ENCODE measurements at regions of chr7 and their contacts with region 1.

Region 1: GRCh38 chr7:41940760-41941343 is 238.0 kb upstream of the INHBA start:
- DNase-seq: peak in 4 of 5 donors; percentile 34 to 41 (median 37)
- H3K4me3 ChIP-seq: no peak overlapping the region
- H3K4me3 Mint-ChIP-seq: no peak overlapping the region
- H3K27ac ChIP-seq: no peak overlapping the region
- H3K27ac Mint-ChIP-seq: no peak overlapping the region
- H3K4me1 ChIP-seq: no peaks in the 10 kb centered on the region
- H3K4me1 Mint-ChIP-seq: peaks cover 6 to 17% (median 13%) of the 10 kb centered on the region in 4 donors
- H3K27me3 ChIP-seq: no peaks in the 10 kb centered on the region
- H3K27me3 Mint-ChIP-seq: peaks cover 14 to 18% of the 10 kb centered on the region in 2 donors

Region 2: GRCh38 chr7:41928781-41929180 is 12.1 kb before region 1 on chr7:
- CTCF ChIA-PET with region 1: interaction called, 15 read pairs
- POLR2A ChIA-PET with region 1: no interaction called
- intact Hi-C with region 1: no loop called
- DNase-seq: no peak
- H3K4me3 ChIP-seq: no peak overlapping the region
- H3K4me3 Mint-ChIP-seq: no peak overlapping the region
- H3K27ac ChIP-seq: no peak overlapping the region
- H3K27ac Mint-ChIP-seq: no peak overlapping the region
- H3K4me1 ChIP-seq: no peaks in the 10 kb centered on the region
- H3K4me1 Mint-ChIP-seq: no peaks in the 10 kb centered on the region
- H3K27me3 ChIP-seq: no peaks in the 10 kb centered on the region
- H3K27me3 Mint-ChIP-seq: peaks cover 6% of the 10 kb centered on the region in 2 donors

Region 3: GRCh38 chr7:41955893-41956675 is 15.2 kb after region 1 on chr7:
- CTCF ChIA-PET with region 1: interaction called, 30 read pairs
- POLR2A ChIA-PET with region 1: no interaction called
- intact Hi-C with region 1: no loop called
- DNase-seq: no peak
- H3K4me3 ChIP-seq: no peak overlapping the region
- H3K4me3 Mint-ChIP-seq: no peak overlapping the region
- H3K27ac ChIP-seq: no peak overlapping the region
- H3K27ac Mint-ChIP-seq: no peak overlapping the region
- H3K4me1 ChIP-seq: no peaks in the 10 kb centered on the region
- H3K4me1 Mint-ChIP-seq: no peaks in the 10 kb centered on the region
- H3K27me3 ChIP-seq: no peaks in the 10 kb centered on the region
- H3K27me3 Mint-ChIP-seq: peaks cover 9 to 30% of the 10 kb centered on the region in 2 donors

Region 4: DNA sequence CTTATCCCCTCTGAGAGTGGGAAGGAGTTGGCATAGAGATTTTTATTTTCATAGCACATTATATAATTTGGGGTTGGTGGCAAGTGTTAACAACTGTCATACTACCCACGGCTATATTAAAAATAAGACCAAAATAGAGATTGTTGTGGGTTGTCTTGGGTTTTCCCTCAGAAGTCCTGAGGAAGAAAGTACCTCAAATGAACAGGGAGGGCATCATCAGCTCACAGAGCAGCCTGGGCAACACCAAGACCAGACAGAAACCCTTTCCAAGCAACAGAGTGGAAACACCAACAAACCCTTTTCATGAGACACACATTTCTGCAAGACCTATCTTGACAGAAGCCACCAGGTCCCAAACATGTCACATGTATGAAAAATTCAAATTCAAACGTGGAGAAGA is 174.9 kb after region 1 on chr7:
- CTCF ChIA-PET with region 1: no interaction called
- POLR2A ChIA-PET with region 1: no interaction called
- intact Hi-C with region 1: no loop called
- DNase-seq: no peak
- H3K4me3 ChIP-seq: no peak overlapping the region
- H3K4me3 Mint-ChIP-seq: no peak overlapping the region
- H3K27ac ChIP-seq: no peak overlapping the region
- H3K27ac Mint-ChIP-seq: no peak overlapping the region
- H3K4me1 ChIP-seq: no peaks in the 10 kb centered on the region
- H3K4me1 Mint-ChIP-seq: no peaks in the 10 kb centered on the region
- H3K27me3 ChIP-seq: no peaks in the 10 kb centered on the region
- H3K27me3 Mint-ChIP-seq: no peaks in the 10 kb centered on the region

Region 5: DNA sequence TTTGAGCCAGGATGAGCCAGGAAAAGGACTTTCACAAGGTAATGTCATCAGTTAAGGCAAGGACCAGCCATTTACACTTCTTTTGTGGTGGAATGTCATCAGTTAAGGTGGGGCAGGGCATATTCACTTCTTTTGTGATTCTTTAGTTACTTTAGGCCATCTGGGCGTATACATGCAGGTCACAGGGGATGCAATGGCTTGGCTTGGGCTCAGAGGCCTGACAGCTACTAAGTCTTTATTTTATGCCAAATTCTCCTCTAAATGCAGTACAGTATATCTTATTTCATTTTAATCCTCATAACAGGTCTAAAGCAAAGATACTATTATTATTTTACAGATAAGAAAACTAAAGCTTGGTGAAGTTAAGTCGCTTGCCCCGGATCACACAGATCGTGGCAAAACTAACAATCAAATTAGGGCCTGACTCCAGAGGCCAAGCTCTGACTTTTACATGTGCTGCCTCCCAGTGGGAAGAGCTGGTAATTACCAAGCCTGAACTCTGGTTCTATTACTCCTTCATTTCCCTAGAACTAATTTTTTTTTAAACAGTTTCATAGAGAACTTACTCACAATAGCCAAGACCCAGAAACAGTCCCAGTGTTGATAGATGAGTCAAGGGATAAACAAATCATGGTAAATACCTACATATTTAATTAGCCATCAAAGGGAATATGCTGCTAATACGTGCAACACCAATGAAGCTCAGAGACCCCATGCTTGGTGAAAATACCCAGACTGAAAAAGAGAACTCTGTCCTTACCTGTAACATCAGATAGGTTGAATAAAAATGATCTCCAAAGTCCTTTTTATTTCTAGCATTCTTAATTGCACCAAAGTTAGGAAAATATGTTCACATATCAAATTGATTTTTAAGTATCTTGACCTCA is 935.6 kb after region 1 on chr7:
- CTCF ChIA-PET with region 1: interaction called, 4 read pairs
- POLR2A ChIA-PET with region 1: no interaction called
- intact Hi-C with region 1: loop called (anchors 2 kb)
- DNase-seq: peak; percentile 11 to 37 (median 24)
- H3K4me3 ChIP-seq: no peak overlapping the region
- H3K4me3 Mint-ChIP-seq: no peak overlapping the region
- H3K27ac ChIP-seq: no peak overlapping the region
- H3K27ac Mint-ChIP-seq: no peak overlapping the region
- H3K4me1 ChIP-seq: no peaks in the 10 kb centered on the region
- H3K4me1 Mint-ChIP-seq: no peaks in the 10 kb centered on the region
- H3K27me3 ChIP-seq: no peaks in the 10 kb centered on the region
- H3K27me3 Mint-ChIP-seq: peaks cover 0 to 3% of the 10 kb centered on the region in 2 donors

Region 6: GRCh38 chr7:43721193-43721806 is 1780.4 kb after region 1 on chr7:
- CTCF ChIA-PET with region 1: no interaction called
- POLR2A ChIA-PET with region 1: no interaction called
- intact Hi-C with region 1: loop called (anchors 5 kb)
- DNase-seq: peak in 4 of 5 donors; percentile 54 to 59 (median 58)
- H3K4me3 ChIP-seq: no peak overlapping the region
- H3K4me3 Mint-ChIP-seq: no peak overlapping the region
- H3K27ac ChIP-seq: no peak overlapping the region
- H3K27ac Mint-ChIP-seq: peak overlapping the region in 3 of 7 donors; percentile 14 to 71 (median 47)
- H3K4me1 ChIP-seq: no peaks in the 10 kb centered on the region
- H3K4me1 Mint-ChIP-seq: peaks cover 23 to 46% (median 34%) of the 10 kb centered on the region in 4 donors
- H3K27me3 ChIP-seq: no peaks in the 10 kb centered on the region
- H3K27me3 Mint-ChIP-seq: no peaks in the 10 kb centered on the region